ENCODE measurements at regions of chr5 and their contacts with region 1.

Region 1: DNA sequence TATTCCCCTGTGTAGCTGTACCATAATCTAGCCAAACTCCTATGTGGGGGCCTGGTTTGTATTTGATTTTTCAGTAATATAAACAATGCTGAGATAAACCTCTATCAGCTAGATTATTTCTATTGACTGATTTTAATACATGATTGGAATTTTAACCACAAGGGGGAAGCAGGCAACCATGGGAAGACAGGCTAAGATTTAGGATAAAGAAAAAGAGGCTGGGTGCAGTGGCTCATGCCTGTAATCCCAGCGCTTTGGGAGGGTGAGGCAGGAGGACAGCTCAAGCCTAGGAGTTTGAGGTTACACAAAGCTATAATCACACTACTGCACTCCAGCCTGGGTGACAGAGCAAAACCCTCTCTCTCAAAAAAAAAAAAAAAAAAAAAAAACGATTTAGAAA is 18.1 kb upstream of the GPX3 start:
- DNase-seq: peak; percentile 55
- H3K4me3 ChIP-seq: no peak overlapping the region
- H3K27ac ChIP-seq: no peak overlapping the region
- H3K4me1 ChIP-seq: no peaks in the 10 kb centered on the region
- H3K27me3 ChIP-seq: peaks cover 0 to 4% of the 10 kb centered on the region in 2 experiments
- CTCF ChIP-seq: peak in 1 of 2 donors; percentile 36
- POLR2A ChIP-seq: no peak

Region 2: GRCh38 chr5:150272526-150272925 is 729.7 kb before region 1 on chr5:
- CTCF ChIA-PET with region 1: no interaction called
- POLR2A ChIA-PET with region 1: no interaction called
- dilution Hi-C with region 1: no loop called
- intact Hi-C with region 1: no loop called
- DNase-seq: peak; percentile 18
- H3K4me3 ChIP-seq: no peak overlapping the region
- H3K27ac ChIP-seq: no peak overlapping the region
- H3K4me1 ChIP-seq: no peaks in the 10 kb centered on the region
- H3K27me3 ChIP-seq: peaks cover 9 to 19% of the 10 kb centered on the region in 2 experiments
- CTCF ChIP-seq: peak in 1 of 2 donors; percentile 42
- POLR2A ChIP-seq: no peak

Region 3: DNA sequence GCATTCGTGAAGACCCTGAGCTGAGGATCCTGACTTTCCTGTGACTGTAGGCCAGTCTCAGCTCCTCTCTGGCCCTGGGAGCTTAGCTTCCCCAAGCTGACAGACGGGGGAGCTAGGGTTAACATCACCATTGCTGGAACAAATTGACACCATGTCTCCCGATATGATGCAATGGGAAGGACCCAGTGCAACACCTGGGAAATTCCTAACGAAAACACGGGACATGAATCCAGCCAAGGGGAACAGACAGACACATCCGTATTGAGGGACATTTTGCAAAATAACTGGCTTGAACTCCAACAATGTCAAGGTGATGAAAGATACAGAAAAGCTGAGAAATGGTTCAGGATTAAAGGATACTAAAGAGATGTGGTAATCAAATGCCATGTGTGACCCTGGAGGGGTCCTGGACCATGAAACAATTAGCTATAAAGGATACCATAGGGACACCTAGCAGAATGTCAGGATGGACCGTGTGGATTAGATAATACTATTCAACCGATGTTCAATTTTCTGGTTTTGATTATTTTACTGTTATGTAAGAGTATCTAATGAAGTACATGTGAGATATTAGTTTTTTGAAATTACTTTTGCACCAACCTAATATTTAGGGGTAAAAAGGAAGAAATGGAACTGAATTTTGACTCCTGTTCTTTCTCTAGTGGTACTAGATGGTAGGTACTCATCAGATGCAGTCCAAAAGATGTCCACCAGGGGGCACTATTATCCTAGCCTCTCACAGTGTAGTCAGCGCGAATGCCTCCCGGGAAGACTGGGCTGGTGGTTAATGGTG is 441.7 kb before region 1 on chr5:
- CTCF ChIA-PET with region 1: no interaction called
- POLR2A ChIA-PET with region 1: no interaction called
- dilution Hi-C with region 1: no loop called
- intact Hi-C with region 1: no loop called
- DNase-seq: peak; percentile 79
- H3K4me3 ChIP-seq: no peak overlapping the region
- H3K27ac ChIP-seq: no peak overlapping the region
- H3K4me1 ChIP-seq: no peaks in the 10 kb centered on the region
- H3K27me3 ChIP-seq: no peaks in the 10 kb centered on the region
- CTCF ChIP-seq: peak; percentile 70 to 79
- POLR2A ChIP-seq: peak; percentile 26

Region 4: DNA sequence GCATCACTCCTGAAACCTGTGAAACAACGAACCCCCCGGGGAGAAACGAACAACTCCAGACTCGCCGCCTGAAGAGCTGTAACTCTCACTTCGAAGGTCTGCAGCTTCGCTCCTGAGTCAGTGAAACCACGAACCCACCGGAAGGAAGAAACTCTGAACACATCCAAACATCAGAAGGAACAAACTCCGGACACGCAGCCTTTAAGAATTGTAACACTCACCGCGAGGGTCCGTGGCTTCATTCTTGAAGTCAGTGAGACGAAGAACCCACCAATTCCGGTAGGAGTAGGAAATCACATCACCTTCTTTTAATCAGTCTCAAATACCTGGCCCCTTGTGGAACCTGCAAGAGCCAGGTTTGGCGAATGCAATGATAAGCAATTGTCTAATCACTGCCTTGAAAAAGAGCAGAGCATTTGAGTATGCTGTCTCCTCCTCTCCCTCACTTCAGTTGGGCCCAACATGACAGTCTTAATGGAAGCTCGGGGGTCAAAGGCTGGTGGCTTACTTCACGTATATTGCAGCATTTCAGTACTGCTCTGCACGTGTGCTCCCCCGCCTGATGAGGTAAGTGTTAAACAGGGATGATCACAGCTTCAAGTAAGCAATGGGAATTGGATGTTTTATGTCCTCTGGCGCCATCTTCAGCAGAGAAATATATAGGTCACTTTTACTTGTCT is 155.5 kb before region 1 on chr5:
- CTCF ChIA-PET with region 1: no interaction called
- POLR2A ChIA-PET with region 1: no interaction called
- dilution Hi-C with region 1: no loop called
- intact Hi-C with region 1: no loop called
- DNase-seq: peak; percentile 86
- H3K4me3 ChIP-seq: no peak overlapping the region
- H3K27ac ChIP-seq: no peak overlapping the region
- H3K4me1 ChIP-seq: no peaks in the 10 kb centered on the region
- H3K27me3 ChIP-seq: peaks cover 3 to 6% of the 10 kb centered on the region in 2 experiments
- CTCF ChIP-seq: peak; percentile 20 to 41
- POLR2A ChIP-seq: no peak

Region 5: GRCh38 chr5:151014680-151015343 is 12.6 kb after region 1 on chr5:
- CTCF ChIA-PET with region 1: interaction called, 28 read pairs
- POLR2A ChIA-PET with region 1: no interaction called
- dilution Hi-C with region 1: no loop called
- intact Hi-C with region 1: no loop called
- DNase-seq: no peak
- H3K4me3 ChIP-seq: no peak overlapping the region
- H3K27ac ChIP-seq: no peak overlapping the region
- H3K4me1 ChIP-seq: no peaks in the 10 kb centered on the region
- H3K27me3 ChIP-seq: peaks cover 7 to 9% of the 10 kb centered on the region in 2 experiments
- CTCF ChIP-seq: no peak
- POLR2A ChIP-seq: no peak

Region 6: GRCh38 chr5:151037561-151038411 is 35.5 kb after region 1 on chr5:
- CTCF ChIA-PET with region 1: interaction called, 19 read pairs
- POLR2A ChIA-PET with region 1: no interaction called
- dilution Hi-C with region 1: no loop called
- intact Hi-C with region 1: no loop called
- DNase-seq: peak; percentile 86
- H3K4me3 ChIP-seq: no peak overlapping the region
- H3K27ac ChIP-seq: peak overlapping the region; percentile 36
- H3K4me1 ChIP-seq: peaks cover 21% of the 10 kb centered on the region
- H3K27me3 ChIP-seq: no peaks in the 10 kb centered on the region
- CTCF ChIP-seq: no peak
- POLR2A ChIP-seq: no peak

Region 7: DNA sequence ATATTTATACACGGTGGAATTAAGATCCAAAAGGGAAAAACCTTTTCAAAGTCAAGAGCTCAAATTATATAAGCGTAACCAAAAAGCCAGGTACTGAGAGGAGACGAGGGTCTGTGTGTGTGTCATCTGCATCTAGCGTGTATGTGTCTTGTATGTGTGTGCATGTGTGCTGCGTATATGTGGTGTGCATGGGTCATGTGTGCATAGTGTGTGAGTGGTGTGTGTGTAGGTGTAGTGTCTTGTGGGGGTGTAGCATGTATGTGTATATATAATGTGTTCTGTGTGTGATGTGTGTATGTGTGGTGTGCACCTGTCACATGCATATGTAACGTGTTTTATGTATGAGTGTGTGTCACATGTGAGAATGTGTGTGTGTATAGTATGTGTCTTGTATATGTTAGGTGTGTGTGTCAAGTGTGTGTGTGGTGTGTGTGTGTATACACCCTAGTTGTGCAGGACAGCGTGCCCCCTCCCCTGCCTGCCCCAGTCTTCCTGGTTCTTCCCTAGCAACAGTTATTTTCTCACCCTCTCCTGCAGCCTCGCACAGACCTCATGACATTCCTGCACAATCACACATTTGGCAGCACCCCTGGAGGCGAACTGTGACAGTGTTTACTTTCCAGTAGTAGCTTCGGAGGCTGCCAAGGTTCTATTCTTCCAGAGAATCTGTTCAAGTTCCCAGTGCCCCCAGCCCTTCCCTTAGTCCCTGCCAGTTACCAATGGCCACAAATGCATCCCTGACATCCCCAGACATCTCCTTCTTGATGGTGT is 105.7 kb after region 1 on chr5:
- CTCF ChIA-PET with region 1: interaction called, 215 read pairs
- POLR2A ChIA-PET with region 1: no interaction called
- dilution Hi-C with region 1: no loop called
- intact Hi-C with region 1: no loop called
- DNase-seq: no peak
- H3K4me3 ChIP-seq: no peak overlapping the region
- H3K27ac ChIP-seq: no peak overlapping the region
- H3K4me1 ChIP-seq: no peaks in the 10 kb centered on the region
- H3K27me3 ChIP-seq: no peaks in the 10 kb centered on the region
- CTCF ChIP-seq: no peak
- POLR2A ChIP-seq: no peak